MCF 10A (cell line): ENCODE measurements at regions of chr1 and their contacts with region 1.

Region 1: GRCh38 chr1:183281553-183282091 is 95.6 kb downstream of the LAMC2 start:
- DNase-seq: peak; percentile 96
- H3K4me3 Mint-ChIP-seq: no peak overlapping the region
- H3K27ac Mint-ChIP-seq: peak overlapping the region; percentile 60
- H3K4me1 Mint-ChIP-seq: peaks cover 56% of the 10 kb centered on the region
- H3K27me3 Mint-ChIP-seq: no peaks in the 10 kb centered on the region
- CTCF ChIP-seq: peak; percentile 92

Region 2: DNA sequence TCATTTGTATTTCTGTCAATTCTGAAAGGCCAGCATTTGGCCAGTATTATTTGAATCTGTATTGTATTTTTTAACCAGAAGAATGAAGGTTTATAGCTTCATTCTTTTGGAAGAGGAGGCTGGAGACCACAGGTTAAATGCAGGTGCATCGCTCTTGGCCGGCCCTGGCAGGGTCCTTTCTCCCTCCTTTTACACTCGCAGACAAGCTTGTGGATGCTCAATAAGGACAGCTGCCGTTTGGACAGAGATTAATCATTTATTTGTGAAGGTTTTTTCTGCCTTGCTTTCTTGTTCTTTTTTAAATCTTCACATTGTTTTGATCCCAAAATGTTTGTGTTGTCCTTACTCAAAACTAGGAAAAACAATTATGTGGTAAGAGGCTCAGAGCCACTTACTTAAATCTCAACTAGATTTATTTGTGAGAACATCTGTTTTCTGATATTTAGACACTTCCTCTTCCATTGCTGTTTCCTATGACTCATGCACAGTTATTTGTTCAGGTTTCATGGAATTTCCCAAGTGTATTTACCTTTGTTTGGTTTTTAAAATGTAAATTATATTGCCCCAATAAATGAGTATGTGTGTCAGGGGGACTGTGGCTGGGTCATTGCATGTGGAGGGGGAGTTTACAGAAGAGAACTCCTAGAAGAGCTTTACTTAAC is 142.2 kb before region 1 on chr1:
- CTCF ChIA-PET with region 1: interaction called, 8 read pairs
- POLR2A ChIA-PET with region 1: interaction called, 12 read pairs
- intact Hi-C with region 1: no loop called
- DNase-seq: peak; percentile 81
- H3K4me3 Mint-ChIP-seq: peak overlapping the region; percentile 1
- H3K27ac Mint-ChIP-seq: peak overlapping the region; percentile 99
- H3K4me1 Mint-ChIP-seq: peaks cover 27% of the 10 kb centered on the region
- H3K27me3 Mint-ChIP-seq: no peaks in the 10 kb centered on the region
- CTCF ChIP-seq: no peak

Region 3: GRCh38 chr1:183168308-183168707 is 113.3 kb before region 1 on chr1:
- CTCF ChIA-PET with region 1: no interaction called
- POLR2A ChIA-PET with region 1: no interaction called
- intact Hi-C with region 1: no loop called
- DNase-seq: no peak
- H3K4me3 Mint-ChIP-seq: no peak overlapping the region
- H3K27ac Mint-ChIP-seq: no peak overlapping the region
- H3K4me1 Mint-ChIP-seq: peaks cover 18% of the 10 kb centered on the region
- H3K27me3 Mint-ChIP-seq: no peaks in the 10 kb centered on the region
- CTCF ChIP-seq: no peak

Region 4: DNA sequence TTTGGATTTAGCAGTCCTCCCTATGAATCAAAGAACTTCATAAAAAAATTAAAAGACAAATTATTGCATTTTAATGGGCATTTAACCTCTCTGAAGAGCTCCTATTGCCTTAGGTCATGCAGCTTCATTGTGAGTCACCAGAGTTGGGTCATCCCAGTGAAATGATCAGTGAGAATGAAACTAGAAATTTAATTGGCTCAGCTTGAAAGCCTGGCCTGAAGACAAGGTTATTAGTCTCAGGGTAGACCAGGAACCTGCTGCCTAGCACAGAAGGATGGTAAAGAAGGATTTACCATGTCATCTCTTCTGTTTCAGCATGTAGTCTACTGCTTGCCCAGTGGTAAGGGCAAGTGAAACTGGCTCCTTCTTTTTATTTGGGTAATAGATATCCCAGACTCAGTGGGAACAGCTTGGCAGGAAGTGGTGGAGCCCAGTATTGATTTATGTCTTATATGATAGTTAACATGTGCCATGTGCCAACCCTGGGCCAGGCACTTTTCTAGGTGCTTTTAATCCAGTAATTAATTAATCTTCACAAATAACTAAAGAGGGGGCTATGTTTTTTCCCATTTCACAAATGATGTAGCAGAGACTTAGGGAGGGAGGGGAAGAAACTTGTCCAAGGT is 72.0 kb before region 1 on chr1:
- CTCF ChIA-PET with region 1: interaction called, 5 read pairs
- POLR2A ChIA-PET with region 1: interaction called, 32 read pairs
- intact Hi-C with region 1: no loop called
- DNase-seq: peak; percentile 96
- H3K4me3 Mint-ChIP-seq: no peak overlapping the region
- H3K27ac Mint-ChIP-seq: peak overlapping the region; percentile 94
- H3K4me1 Mint-ChIP-seq: peaks cover 46% of the 10 kb centered on the region
- H3K27me3 Mint-ChIP-seq: no peaks in the 10 kb centered on the region
- CTCF ChIP-seq: no peak

Region 5: GRCh38 chr1:183270541-183271141 is 11.0 kb before region 1 on chr1:
- CTCF ChIA-PET with region 1: interaction called, 101 read pairs
- POLR2A ChIA-PET with region 1: interaction called, 42 read pairs
- intact Hi-C with region 1: no loop called
- DNase-seq: peak; percentile 94
- H3K4me3 Mint-ChIP-seq: no peak overlapping the region
- H3K27ac Mint-ChIP-seq: peak overlapping the region; percentile 90
- H3K4me1 Mint-ChIP-seq: peaks cover 59% of the 10 kb centered on the region
- H3K27me3 Mint-ChIP-seq: no peaks in the 10 kb centered on the region
- CTCF ChIP-seq: no peak

Region 6: DNA sequence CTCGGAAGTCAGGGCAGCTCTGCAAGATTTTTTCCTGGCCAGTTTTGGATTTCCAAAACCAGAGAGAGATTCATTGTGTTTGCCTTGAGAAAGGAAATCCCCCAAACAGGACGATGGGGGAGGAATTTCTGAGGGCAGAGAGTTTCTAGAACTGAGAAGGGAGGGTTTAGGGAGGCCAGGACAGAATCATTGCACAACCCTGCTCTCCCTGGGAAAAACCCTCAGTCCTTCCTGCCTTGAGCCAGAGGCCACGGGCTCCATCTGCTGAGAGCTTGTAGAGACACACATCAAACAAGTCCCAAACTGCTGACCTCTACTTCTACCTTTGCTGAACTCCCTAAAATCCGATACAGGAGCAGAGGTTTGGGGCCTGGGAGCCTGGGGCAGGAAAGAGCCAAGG is 36.8 kb after region 1 on chr1:
- CTCF ChIA-PET with region 1: interaction called, 253 read pairs
- POLR2A ChIA-PET with region 1: interaction called, 94 read pairs
- intact Hi-C with region 1: loop called (anchors 1 kb)
- DNase-seq: peak; percentile 95
- H3K4me3 Mint-ChIP-seq: no peak overlapping the region
- H3K27ac Mint-ChIP-seq: peak overlapping the region; percentile 60
- H3K4me1 Mint-ChIP-seq: peaks cover 26% of the 10 kb centered on the region
- H3K27me3 Mint-ChIP-seq: no peaks in the 10 kb centered on the region
- CTCF ChIP-seq: peak; percentile 79

Region 7: DNA sequence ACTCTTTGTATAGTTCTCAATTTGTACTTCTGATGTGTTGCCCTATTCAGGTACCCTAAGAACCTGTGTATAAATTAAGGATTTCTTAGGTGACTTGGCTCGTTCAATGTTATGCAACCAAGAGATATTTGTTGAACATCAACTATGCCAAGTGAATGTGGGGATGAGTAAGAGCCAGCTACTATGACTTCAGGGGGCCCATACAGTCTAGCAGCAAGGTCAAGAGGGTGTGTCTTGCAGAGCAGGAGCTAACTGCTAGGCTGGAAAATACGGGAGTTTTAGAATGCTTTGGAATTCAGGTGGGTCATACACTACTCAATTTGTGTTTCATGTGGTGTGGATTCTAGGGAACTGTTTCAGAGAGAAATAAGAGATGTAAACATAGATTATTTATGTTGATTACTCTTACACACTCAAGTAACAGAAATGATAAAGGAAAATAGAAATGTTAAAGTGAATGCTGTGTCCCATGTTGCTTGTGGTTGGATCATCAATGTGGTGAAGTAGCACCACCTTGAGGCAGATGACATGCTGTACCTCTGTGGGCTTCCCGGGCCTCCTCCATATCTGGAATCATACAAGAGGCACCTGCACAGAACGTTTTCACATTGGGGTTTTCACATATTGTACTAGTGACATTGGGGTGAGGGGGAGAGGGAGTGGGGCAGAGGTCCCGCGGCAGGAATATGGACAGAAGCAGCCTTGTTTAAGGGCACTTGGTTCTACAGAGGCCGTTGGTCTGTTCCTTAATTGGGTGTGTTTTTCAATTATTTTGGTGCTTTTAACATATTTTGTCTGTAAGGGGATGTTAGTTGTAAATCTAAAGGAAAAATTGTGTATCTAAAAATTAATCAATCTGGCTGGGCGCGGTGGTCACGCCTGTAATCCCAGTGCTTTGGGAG is 341.5 kb after region 1 on chr1:
- CTCF ChIA-PET with region 1: interaction called, 13 read pairs
- POLR2A ChIA-PET with region 1: interaction called, 3 read pairs
- intact Hi-C with region 1: loop called (anchors 1 kb)
- DNase-seq: peak; percentile 86
- H3K4me3 Mint-ChIP-seq: no peak overlapping the region
- H3K27ac Mint-ChIP-seq: peak overlapping the region; percentile 65
- H3K4me1 Mint-ChIP-seq: peaks cover 35% of the 10 kb centered on the region
- H3K27me3 Mint-ChIP-seq: no peaks in the 10 kb centered on the region
- CTCF ChIP-seq: peak; percentile 97

Region 8: DNA sequence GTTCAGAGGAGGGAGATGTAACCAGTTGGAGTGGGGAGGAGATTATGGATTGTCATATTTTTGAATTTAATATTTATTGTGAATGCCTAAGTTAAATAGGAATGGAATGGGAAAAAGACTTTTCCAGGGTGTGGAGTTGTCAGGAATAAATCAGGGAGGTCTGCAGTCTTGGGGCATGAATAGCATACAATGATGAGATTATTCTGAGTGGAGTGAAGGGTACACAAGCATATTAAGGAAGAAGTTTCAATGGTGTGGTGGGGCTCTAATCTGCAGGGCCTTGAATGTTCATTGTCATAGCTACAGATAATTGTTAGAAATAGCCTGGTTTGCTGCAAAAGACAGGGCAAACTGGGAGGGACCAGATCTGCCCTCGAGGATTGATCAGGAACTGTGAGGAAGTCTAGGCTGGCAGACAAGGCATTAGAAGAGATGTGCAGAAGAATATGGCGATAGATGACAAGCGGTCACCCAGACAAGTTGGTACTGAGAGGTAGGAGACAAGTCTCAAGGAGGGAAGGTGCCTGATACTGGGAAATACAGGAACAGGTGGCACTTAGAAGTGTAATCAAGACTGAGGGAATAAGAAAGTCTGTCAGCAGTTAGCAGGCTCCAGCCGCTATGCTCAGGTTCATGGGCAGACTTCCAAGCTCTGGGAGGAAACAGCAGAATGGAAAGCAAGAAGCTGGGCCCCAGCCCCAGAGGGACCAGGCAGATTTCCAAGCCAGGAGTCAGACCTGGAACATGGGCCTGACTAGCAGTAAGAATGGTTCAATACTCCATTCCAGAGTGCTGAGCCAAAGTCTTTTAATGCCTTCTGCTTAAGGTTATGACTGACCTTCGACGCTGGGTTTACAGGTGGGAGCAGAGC is 502.4 kb after region 1 on chr1:
- CTCF ChIA-PET with region 1: no interaction called
- POLR2A ChIA-PET with region 1: no interaction called
- intact Hi-C with region 1: no loop called
- DNase-seq: peak; percentile 79
- H3K4me3 Mint-ChIP-seq: no peak overlapping the region
- H3K27ac Mint-ChIP-seq: peak overlapping the region; percentile 4
- H3K4me1 Mint-ChIP-seq: peaks cover 19% of the 10 kb centered on the region
- H3K27me3 Mint-ChIP-seq: no peaks in the 10 kb centered on the region
- CTCF ChIP-seq: no peak